ENCODE measurements at regions of chr17 and their contacts with region 1.

Region 1: DNA sequence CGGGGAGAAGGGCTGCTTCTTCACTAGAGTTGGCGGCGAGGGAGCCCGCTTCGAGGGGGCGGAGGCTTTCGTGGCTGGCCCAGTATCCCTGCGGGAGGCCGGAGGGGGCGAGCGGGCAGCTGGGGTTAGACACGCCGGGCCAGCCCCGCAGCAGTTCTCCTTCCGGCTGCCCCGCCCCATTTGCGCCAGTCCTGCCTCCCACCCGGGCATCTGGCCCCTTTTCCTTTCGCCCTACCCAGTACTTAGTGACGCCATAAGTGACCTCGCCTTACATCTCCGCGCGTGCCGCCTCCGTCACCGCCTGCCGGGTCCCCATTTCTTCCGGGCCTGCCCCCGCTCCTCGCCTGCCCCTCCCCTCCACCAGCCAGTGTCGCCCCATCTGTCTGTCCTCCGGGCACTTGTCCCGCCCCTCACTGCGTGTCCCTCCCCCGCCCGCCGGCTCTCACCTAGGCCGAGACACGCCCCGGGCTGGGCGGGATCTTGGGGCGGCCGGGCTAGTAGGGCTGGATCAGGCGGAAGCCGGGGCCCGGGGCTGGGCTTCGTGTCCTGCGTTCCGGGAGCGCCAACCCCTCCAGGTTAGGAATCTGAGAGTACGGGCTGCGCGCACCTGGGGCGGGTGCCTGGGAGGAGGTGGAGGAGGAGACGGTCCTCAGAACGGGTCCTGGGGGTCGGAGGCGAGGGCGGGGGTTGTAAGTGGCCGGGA is 14.3 kb downstream of the SPATA32 start:
- DNase-seq: no peak
- H3K4me3 ChIP-seq: peak overlapping the region; percentile 53
- CTCF ChIP-seq: no peak

Region 2: DNA sequence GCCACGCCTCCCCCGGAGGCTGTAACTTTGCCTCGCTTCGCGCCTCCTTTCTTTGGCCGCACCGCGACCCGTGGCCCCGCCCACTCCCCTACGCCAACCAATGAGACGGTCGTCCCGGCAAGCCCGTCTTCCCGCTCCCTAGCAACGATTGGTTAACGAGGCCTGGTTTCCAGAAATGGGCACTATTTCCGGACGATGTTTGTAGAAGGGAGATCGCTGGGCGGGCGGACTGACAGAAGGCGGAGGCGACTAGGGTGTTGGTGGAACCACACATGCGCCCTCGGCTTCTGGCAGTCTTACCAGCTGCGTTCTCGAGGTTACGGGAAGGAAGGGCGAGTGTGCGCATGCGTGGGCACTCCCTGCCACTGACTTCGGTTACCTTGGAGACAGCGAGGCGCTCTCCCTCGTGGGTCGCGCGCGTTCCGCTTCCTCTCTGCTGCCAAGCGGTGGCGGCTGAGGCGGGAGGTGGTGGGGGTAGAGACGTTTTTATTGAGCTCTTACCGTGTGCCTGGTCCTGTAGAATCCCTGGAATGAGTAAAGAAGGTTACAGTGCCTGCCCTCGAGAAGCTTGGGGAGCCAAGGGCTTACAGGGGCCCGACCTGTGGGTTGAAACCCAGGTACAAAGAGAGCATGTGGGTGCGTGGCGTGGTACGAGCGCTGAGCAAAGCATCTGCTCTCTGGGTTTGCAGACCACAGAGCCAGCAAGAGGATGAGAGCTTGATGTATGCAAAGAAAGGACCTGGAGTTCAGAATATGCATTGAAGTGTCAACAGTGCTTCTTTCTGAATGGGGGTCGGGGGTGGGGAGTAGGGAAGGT is 69.7 kb after region 1 on chr17:
- in situ Hi-C with region 1: loop called (anchors 5 kb)
- DNase-seq: peak; percentile 100
- H3K4me3 ChIP-seq: peak overlapping the region; percentile 39
- CTCF ChIP-seq: no peak

Region 3: DNA sequence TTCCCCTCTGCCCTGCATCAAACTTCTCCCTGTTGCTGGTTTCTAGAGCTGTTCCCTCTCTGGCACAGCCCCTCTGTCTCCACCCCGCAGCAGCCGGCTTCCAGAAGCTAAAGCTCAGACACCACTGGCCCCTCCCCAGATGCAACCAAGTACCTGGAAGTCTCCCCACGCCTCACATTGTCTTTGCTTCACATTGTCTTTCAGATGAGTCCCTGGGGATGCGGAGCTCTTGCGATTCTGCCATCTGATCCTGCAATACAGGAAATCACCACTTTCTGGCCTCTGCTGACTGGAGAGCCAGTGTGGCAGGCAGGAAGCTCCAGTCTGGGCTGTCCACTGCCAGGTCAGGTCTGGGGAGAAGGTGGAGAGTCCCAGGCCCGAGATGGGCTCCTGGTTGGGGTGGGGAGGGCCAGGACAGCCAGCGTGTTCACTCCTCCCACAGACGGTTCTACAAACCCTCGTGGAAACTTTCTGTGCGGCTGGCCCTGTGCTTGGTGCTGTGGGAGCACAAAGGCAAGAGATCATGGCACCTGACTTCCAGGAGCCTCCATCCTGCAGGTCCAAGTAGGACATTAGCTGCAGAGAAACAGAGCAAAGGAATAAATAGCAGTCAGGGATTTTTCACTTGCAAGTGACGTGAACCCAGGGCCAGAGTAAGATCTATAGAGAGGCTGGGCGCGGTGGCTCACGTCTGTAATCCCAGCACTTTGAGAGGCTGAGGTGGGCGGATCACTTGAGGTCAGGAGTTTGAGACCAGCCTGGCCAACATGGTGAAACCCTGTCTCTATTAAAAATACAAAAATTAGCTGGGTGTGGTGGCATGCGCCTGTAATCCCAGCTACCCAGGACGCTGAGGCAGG is 117.2 kb after region 1 on chr17:
- in situ Hi-C with region 1: loop called (anchors 5 kb)
- DNase-seq: no peak
- H3K4me3 ChIP-seq: no peak overlapping the region
- CTCF ChIP-seq: no peak